ENCODE measurements at regions of chr6 and their contacts with region 1.

Region 1: DNA sequence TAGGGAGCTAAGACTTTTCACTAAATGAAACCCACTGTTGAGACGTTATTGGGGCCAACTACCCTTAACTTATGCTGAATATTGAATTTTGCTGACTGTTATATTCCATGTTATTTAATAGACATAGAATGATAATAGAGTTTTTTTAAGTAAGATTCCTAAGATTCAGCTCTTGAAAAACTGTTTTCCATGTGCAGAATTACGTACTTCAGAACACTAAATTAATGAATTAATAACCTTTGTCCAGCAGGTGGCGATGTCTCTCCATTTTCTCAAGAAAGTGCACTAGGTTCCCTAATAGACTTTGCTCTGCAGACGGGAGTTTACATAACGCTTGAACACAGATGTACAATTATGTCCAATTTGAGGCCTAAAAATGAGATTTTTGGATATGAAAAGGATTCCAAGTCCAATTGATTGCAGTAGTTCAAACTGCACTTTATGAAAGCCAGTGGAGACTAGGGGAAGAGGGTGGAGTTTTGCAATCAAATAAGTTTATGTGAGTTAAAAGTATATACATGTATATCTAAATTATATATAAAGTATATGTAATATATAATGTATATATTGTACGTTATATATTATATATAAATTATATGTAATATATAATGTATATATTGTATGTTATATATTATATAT is 282.1 kb downstream of the UST start:
- DNase-seq: peak; percentile 89
- H3K4me3 Mint-ChIP-seq: no peak overlapping the region
- H3K27ac Mint-ChIP-seq: peak overlapping the region; percentile 8
- H3K4me1 Mint-ChIP-seq: peaks cover 29% of the 10 kb centered on the region
- H3K27me3 Mint-ChIP-seq: no peaks in the 10 kb centered on the region
- CTCF ChIP-seq: peak; percentile 56

Region 2: GRCh38 chr6:148304976-148305375 is 723.9 kb before region 1 on chr6:
- CTCF ChIA-PET with region 1: no interaction called
- POLR2A ChIA-PET with region 1: no interaction called
- intact Hi-C with region 1: no loop called
- DNase-seq: no peak
- H3K4me3 Mint-ChIP-seq: no peak overlapping the region
- H3K27ac Mint-ChIP-seq: no peak overlapping the region
- H3K4me1 Mint-ChIP-seq: no peaks in the 10 kb centered on the region
- H3K27me3 Mint-ChIP-seq: no peaks in the 10 kb centered on the region
- CTCF ChIP-seq: no peak

Region 3: DNA sequence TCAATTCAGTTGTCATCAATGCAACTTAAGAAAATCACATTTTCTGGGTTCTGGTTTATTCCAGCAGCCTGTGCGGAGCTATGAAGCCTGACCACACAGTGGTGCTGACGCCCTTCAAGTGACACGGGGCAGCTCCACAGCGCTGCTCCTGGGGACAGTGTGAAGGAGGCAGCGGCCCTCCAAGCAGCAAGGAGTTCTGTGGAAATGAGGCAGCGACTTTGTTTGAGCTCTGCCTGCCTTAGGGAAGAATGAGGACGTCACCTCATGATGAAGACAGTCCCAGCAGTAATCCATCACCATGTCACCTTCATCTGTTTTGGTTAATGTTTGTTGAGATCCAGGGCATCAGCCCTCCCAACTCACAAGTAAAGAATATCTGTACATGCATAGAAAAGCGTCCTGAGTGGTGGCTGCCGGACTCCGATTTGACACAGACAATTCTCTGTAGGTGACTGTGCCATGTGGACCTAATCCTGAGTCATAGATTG is 450.6 kb before region 1 on chr6:
- CTCF ChIA-PET with region 1: interaction called, 32 read pairs
- POLR2A ChIA-PET with region 1: interaction called, 6 read pairs
- intact Hi-C with region 1: loop called (anchors 1 kb)
- DNase-seq: peak; percentile 79
- H3K4me3 Mint-ChIP-seq: no peak overlapping the region
- H3K27ac Mint-ChIP-seq: no peak overlapping the region
- H3K4me1 Mint-ChIP-seq: no peaks in the 10 kb centered on the region
- H3K27me3 Mint-ChIP-seq: no peaks in the 10 kb centered on the region
- CTCF ChIP-seq: peak; percentile 83

Region 4: DNA sequence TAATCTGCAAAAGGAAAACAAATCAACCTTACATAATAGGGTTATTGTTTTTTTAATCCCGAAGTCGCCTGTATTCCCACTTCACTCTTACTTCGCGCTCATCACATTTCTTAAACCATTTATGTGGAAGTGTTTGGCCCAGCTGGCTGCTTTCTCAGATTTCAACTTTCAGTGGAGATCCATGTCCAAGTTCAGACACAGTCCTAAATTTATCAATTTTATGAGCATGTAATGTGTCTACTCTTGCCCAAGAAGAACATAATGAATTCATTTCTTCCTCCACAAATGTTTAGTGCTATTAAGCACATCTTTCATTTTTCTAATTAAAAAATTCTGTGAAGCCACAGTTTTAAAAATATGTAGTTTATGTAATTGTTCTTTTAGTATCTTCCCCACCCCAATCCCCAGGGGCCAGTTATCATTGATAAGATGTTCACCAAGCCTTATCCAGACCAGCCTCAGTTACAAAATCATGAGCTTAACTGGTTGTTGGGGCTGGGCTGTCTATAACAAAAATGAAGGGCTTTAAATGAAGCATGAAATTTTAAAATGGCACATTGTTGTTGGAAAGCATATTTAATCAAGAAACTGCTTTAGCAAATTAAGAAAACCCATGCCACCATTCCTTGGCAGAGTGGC is 130.4 kb before region 1 on chr6:
- CTCF ChIA-PET with region 1: no interaction called
- POLR2A ChIA-PET with region 1: no interaction called
- intact Hi-C with region 1: no loop called
- DNase-seq: no peak
- H3K4me3 Mint-ChIP-seq: no peak overlapping the region
- H3K27ac Mint-ChIP-seq: no peak overlapping the region
- H3K4me1 Mint-ChIP-seq: no peaks in the 10 kb centered on the region
- H3K27me3 Mint-ChIP-seq: no peaks in the 10 kb centered on the region
- CTCF ChIP-seq: no peak

Region 5: GRCh38 chr6:149043476-149044130 is 14.7 kb after region 1 on chr6:
- CTCF ChIA-PET with region 1: interaction called, 11 read pairs
- POLR2A ChIA-PET with region 1: interaction called, 12 read pairs
- intact Hi-C with region 1: no loop called
- DNase-seq: peak; percentile 16
- H3K4me3 Mint-ChIP-seq: no peak overlapping the region
- H3K27ac Mint-ChIP-seq: no peak overlapping the region
- H3K4me1 Mint-ChIP-seq: no peaks in the 10 kb centered on the region
- H3K27me3 Mint-ChIP-seq: no peaks in the 10 kb centered on the region
- CTCF ChIP-seq: peak; percentile 24

Region 6: GRCh38 chr6:149075616-149076364 is 46.9 kb after region 1 on chr6:
- CTCF ChIA-PET with region 1: interaction called, 16 read pairs
- POLR2A ChIA-PET with region 1: interaction called, 69 read pairs
- intact Hi-C with region 1: no loop called
- DNase-seq: peak; percentile 39
- H3K4me3 Mint-ChIP-seq: peak overlapping the region; percentile 10
- H3K27ac Mint-ChIP-seq: peak overlapping the region; percentile 70
- H3K4me1 Mint-ChIP-seq: peaks cover 22% of the 10 kb centered on the region
- H3K27me3 Mint-ChIP-seq: no peaks in the 10 kb centered on the region
- CTCF ChIP-seq: no peak

Region 7: GRCh38 chr6:149335924-149336608 is 307.2 kb after region 1 on chr6:
- CTCF ChIA-PET with region 1: interaction called, 4 read pairs
- POLR2A ChIA-PET with region 1: interaction called, 21 read pairs
- intact Hi-C with region 1: no loop called
- DNase-seq: peak; percentile 90
- H3K4me3 Mint-ChIP-seq: peak overlapping the region; percentile 36
- H3K27ac Mint-ChIP-seq: peak overlapping the region; percentile 89
- H3K4me1 Mint-ChIP-seq: peaks cover 63% of the 10 kb centered on the region
- H3K27me3 Mint-ChIP-seq: no peaks in the 10 kb centered on the region
- CTCF ChIP-seq: no peak

Region 8: DNA sequence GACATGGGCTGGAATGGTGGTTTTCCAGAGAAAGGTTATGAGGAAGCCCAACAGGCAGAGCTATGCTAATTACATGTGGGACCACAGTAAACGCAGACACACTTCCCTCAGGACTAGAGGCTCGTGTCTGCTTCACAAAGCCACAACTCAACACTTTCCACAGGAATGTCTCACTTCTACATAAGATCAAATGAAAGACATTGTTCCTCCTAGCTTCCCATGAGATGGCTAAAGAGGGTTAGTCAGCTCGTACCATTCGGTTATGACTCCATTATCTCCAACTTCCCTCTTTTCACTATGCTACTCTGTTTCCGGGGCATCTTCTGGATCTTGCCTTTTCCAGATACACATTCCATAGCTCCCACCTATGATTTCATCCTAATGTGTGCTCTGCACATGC is 485.0 kb after region 1 on chr6:
- CTCF ChIA-PET with region 1: interaction called, 14 read pairs
- POLR2A ChIA-PET with region 1: interaction called, 5 read pairs
- intact Hi-C with region 1: loop called (anchors 1 kb)
- DNase-seq: no peak
- H3K4me3 Mint-ChIP-seq: no peak overlapping the region
- H3K27ac Mint-ChIP-seq: no peak overlapping the region
- H3K4me1 Mint-ChIP-seq: peaks cover 6% of the 10 kb centered on the region
- H3K27me3 Mint-ChIP-seq: no peaks in the 10 kb centered on the region
- CTCF ChIP-seq: no peak